ENCODE measurements at regions of chr7 and their contacts with region 1.

Region 1: DNA sequence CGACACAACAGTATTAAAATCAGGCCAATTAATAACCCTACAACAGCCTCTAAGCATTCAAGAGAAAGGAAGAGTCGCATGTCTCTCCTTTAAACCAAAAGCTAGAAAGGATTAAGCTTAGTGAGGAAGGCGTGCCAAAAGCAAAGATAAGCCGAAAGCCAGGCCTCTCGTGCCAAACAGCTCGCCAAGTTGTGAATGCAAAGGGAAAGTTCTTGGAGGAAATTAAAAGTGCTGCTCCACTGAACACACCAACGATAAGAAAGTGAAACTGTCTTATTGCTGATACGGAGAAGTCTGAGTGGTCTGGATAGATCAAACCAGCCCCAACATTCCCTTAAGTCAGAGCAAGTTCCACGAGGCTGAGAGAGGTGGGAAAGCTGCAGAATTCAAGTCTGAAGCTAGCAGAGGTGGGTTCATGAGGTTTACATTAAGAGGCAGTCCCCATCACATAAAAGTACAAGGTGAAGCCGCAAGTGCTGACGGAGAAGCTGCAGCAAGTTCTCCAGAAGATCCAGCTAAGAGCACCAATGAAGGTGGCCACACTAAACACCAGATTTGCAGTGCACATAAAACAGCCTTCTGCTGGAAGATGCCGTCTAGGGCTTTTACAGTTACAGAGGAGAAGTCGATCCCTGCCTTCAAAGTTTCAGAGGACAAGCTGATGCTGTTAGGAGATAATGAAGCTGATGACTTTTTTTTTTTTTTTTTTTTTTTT is 194.8 kb downstream of the MAD1L1 start:
- DNase-seq: peak; percentile 45 to 50
- ATAC-seq: peak; percentile 39 to 78 (median 50)
- H3K4me3 ChIP-seq: peak overlapping the region in 8 of 10 donors; percentile 11 to 47 (median 40)
- H3K27ac ChIP-seq: peak overlapping the region in 6 of 10 donors; percentile 10 to 69 (median 51)
- H3K4me1 ChIP-seq: peaks cover 0 to 24% (median 17%) of the 10 kb centered on the region in 9 donors
- H3K27me3 ChIP-seq: no peaks in the 10 kb centered on the region
- CTCF ChIP-seq: no peak

Region 2: DNA sequence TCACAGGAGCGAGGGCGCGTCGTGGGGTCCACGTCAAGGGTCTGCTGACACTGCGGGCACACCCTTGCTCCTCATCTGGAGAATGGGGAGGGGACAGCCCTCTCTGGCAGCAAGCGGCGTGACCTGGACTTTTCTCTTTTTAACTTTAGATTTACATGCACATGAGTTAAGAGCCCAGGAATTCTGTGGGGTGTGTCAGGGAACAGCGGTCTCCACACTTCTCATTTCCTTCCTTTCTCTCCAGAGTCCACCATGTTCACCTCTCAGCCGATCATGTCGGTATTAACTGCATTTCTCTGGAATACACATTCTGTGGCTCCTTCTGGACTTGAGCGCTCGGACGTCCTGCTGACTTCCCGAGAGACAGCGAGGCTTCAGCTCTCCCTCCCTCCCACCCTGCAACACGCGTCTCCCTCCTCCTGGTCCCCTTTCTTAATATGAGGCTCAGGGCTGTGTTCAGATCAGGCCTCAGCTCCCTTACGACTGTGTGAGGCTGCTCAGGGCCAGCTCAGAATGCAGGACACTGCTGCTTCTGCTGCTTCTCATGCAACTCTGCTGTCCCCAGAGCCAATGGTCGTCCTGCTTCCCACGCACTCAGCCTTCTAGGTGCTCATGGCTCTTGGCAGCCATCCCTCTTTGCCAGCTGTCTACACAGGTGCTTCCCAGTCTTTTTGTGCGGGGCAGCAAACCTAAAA is 106.6 kb before region 1 on chr7:
- intact Hi-C with region 1: no loop called
- DNase-seq: no peak
- ATAC-seq: no peak
- H3K4me3 ChIP-seq: no peak overlapping the region
- H3K27ac ChIP-seq: no peak overlapping the region
- H3K4me1 ChIP-seq: peaks cover 0 to 3% (median 0%) of the 10 kb centered on the region in 9 donors
- H3K27me3 ChIP-seq: no peaks in the 10 kb centered on the region
- CTCF ChIP-seq: no peak

Region 3: DNA sequence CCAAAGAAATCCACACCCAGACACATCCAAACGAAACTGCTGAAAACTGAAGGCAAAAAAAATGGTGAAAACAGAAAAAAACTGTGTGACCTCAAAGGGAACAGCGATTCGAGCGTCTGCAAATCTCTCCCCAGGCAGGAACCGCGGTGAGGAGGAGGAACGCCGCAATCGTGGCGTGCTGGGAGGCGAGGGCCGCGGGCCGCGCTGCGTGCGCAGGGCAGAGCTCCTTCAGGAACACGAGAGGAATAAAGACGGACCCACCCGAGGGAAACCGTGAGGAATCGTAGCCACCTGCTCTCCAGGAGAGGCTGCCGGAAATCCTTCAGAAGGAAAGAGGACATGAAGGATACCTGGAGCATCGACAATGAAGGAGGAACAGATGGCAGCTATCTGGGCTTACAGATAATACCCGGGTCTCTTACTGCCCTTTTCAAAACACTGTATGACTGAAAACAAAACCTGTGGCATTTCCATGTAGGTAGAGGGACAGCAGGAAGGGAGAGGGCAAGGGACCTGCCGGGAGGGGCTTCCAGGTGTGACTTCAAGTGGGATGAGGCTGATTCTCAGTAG is 71.2 kb before region 1 on chr7:
- intact Hi-C with region 1: loop called in 1 of 10 experiments (anchors 2 kb)
- DNase-seq: no peak
- ATAC-seq: no peak
- H3K4me3 ChIP-seq: no peak overlapping the region
- H3K27ac ChIP-seq: no peak overlapping the region
- H3K4me1 ChIP-seq: peaks cover 0 to 11% (median 4%) of the 10 kb centered on the region in 9 donors
- H3K27me3 ChIP-seq: no peaks in the 10 kb centered on the region
- CTCF ChIP-seq: no peak

Region 4: DNA sequence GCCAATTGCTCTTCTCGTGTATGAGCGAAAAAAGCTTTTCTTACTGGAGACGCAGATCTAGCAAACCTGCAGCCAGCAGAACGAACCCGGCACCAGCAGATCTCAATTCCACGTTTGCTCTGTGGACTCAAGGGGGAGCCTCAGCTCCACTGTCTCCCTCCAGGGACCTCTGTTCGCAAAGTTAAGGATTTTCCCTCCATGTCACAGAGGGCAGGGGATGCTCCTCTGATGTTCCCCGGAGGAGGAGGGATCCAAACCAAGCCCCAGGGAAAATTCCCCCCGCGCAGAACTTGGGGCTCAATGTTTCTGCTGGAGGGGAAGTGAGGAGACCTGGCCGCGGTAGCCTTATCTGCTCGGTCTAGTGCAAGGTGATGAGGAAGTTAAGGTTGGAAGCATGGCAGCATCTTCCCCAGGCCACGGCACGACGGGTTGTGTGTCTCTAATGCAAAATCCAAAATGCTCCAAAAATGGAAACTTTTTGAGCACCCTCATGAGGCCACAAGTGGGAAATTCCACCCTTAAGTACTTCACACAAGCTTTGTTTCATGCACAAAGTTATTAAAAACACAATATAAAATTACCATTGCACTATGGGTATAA is 529.8 kb after region 1 on chr7:
- intact Hi-C with region 1: no loop called
- DNase-seq: peak in 1 of 2 donors; percentile 34
- ATAC-seq: peak; percentile 79 to 89 (median 82)
- H3K4me3 ChIP-seq: peak overlapping the region in 2 of 10 donors; percentile 20 to 21
- H3K27ac ChIP-seq: no peak overlapping the region
- H3K4me1 ChIP-seq: peaks cover 0 to 18% (median 11%) of the 10 kb centered on the region in 9 donors
- H3K27me3 ChIP-seq: no peaks in the 10 kb centered on the region
- CTCF ChIP-seq: peak; percentile 39 to 72 (median 64)

Region 5: DNA sequence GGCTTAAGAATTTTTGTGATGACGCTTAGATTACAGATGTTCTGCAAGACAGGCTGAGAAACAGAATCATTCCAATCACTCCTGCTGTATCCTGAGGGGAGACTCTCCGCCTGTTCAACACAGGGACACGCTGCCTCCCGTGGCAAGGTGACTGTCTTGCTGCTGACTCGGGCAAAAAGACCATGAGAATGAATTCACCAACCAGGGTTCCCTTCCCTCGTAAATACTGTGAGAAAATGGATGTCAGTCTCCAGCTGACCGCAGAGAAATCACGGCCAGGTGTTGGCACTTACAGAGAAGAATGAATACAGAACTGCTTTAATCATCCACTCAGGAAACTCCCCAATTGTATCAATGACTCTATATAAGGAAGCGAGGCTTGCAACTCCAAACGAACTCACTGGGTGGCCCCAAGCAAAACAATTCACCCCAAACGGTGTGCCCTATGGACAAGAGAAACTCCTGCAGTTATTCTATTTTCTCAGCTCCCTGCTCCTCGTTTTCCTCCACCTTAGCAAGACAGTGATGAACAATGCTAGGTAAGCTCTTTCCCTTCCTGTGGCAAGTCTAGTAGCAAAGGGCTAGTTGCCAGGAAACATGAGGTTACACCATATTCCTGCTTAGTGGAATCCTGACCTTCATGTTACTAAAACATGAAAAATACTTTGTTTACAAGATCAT is 783.3 kb after region 1 on chr7:
- intact Hi-C with region 1: no loop called
- DNase-seq: no peak
- ATAC-seq: peak in 1 of 8 donors; percentile 16
- H3K4me3 ChIP-seq: no peak overlapping the region
- H3K27ac ChIP-seq: peak overlapping the region in 8 of 10 donors; percentile 11 to 73 (median 56)
- H3K4me1 ChIP-seq: peaks cover 19 to 88% (median 75%) of the 10 kb centered on the region in 9 donors
- H3K27me3 ChIP-seq: no peaks in the 10 kb centered on the region
- CTCF ChIP-seq: peak in 1 of 9 donors; percentile 11

Measured in heart right ventricle (tissue), 16 donors.